Naive thymus-derived CD8-positive, alpha-beta T cell (primary cell): ENCODE measurements at regions of chr19 and their contacts with region 1.

Region 1: GRCh38 chr19:41541990-41542584 is 33.9 kb upstream of the CEACAM21 start:
- DNase-seq: peak; percentile 56 to 88 (median 71)
- ATAC-seq: peak; percentile 20 to 35
- H3K4me3 Mint-ChIP-seq: peak overlapping the region in 9 of 10 donors; percentile 32 to 78 (median 62)
- H3K27ac Mint-ChIP-seq: peak overlapping the region; percentile 7 to 90 (median 72)
- H3K4me1 Mint-ChIP-seq: peaks cover 37 to 57% (median 46%) of the 10 kb centered on the region in 4 donors
- H3K27me3 Mint-ChIP-seq: no peaks in the 10 kb centered on the region

Region 2: GRCh38 chr19:41484822-41485221 is 57.3 kb before region 1 on chr19:
- POLR2A ChIA-PET with region 1: no interaction called
- DNase-seq: no peak
- ATAC-seq: no peak
- H3K4me3 Mint-ChIP-seq: no peak overlapping the region
- H3K27ac Mint-ChIP-seq: peak overlapping the region in 1 of 10 donors; percentile 45
- H3K4me1 Mint-ChIP-seq: no peaks in the 10 kb centered on the region
- H3K27me3 Mint-ChIP-seq: peaks cover 26 to 76% (median 47%) of the 10 kb centered on the region in 5 donors

Region 3: GRCh38 chr19:41501854-41502253 is 40.2 kb before region 1 on chr19:
- POLR2A ChIA-PET with region 1: no interaction called
- DNase-seq: no peak
- ATAC-seq: no peak
- H3K4me3 Mint-ChIP-seq: no peak overlapping the region
- H3K27ac Mint-ChIP-seq: no peak overlapping the region
- H3K4me1 Mint-ChIP-seq: peaks cover 0 to 3% (median 0%) of the 10 kb centered on the region in 4 donors
- H3K27me3 Mint-ChIP-seq: peaks cover 37 to 85% (median 53%) of the 10 kb centered on the region in 5 donors

Region 4: DNA sequence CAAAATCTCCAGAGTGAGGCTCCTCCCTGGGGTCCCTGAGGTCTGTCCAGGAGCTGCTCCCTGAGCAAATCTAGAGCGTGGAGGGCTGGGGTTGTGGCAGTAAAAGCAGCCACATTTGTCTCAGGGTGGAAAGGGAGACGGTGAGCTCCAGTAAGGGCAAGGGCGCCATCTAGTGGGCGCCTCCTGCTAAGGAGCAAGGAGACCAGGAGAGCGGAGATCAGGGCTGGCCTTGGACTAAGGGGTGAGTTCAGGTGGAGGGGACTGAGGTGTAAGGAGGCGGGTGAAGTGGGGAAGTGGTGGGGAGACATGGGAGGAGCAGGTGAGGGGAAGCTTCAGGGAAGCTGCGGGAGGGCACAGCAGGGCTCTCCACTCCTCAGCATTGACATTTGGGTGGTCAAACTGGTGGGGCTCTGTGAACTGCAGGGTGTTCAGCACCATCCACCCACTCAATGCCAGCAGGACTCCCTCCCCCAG is 28.6 kb after region 1 on chr19:
- POLR2A ChIA-PET with region 1: interaction called, 562 read pairs
- DNase-seq: peak; percentile 69 to 92 (median 83)
- ATAC-seq: peak; percentile 98 to 99
- H3K4me3 Mint-ChIP-seq: peak overlapping the region in 2 of 10 donors; percentile 42 to 63
- H3K27ac Mint-ChIP-seq: peak overlapping the region in 7 of 10 donors; percentile 41 to 90 (median 74)
- H3K4me1 Mint-ChIP-seq: peaks cover 17 to 53% (median 47%) of the 10 kb centered on the region in 4 donors
- H3K27me3 Mint-ChIP-seq: peaks cover 0 to under 1% (median 0%) of the 10 kb centered on the region in 5 donors